IMR-90 (cell line): ENCODE measurements at regions of chr6 and their contacts with region 1.

Region 1: DNA sequence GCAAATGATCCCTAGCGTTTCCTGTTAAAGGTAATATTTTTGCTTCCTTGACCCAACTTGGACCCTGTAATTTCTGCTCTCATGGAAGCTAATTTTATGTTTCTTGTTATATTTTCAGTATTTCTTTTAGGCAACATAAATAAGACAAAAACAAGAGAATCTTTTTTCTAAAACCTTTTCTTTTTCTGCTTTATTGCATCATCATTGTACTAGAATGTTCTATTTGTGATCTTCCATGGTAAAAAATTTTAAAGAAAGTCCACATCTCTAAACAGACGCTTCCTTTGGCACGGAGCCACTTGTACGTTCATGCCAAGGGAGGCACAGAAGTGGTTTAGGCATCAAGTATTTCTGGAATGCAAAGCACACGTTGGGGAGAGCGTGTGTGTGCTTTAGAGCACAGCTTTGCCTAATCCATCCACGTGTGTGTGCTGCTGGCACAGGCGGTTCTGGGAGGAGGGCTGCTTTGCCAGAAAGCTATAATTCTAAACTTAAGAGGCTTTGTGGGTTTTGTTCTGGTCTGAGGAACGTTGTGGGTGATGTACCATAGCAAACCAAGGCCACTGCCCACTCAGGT is 98.3 kb downstream of the SASH1 start:
- DNase-seq: peak; percentile 85
- ATAC-seq: peak; percentile 73
- H3K4me3 ChIP-seq: no peak overlapping the region
- H3K27ac ChIP-seq: peak overlapping the region; percentile 83
- H3K4me1 ChIP-seq: peaks cover 15% of the 10 kb centered on the region
- H3K27me3 ChIP-seq: no peaks in the 10 kb centered on the region
- CTCF ChIP-seq: no peak
- POLR2A ChIP-seq: no peak
- RAD21 ChIP-seq: no peak

Region 2: DNA sequence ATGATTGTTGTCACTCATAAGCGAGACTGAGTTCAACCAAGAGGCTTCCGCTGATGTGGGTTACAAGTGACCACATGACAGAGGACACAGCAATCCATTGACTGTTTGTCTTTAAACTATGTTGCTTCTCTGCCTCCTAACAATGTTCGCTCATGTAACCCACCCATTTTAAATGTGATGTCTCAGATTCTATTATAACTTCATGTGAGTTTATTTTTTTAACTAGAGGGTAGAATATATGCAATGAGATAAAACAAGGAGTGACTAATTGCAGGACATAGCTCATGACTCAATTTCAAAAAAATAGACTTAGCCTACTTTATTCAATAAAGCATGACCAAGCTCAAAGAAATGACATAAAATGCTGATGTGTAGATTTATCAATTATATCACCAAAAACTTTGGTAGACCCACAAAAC is 217.5 kb before region 1 on chr6:
- CTCF ChIA-PET with region 1: no interaction called
- POLR2A ChIA-PET with region 1: no interaction called
- dilution Hi-C with region 1: no loop called
- in situ Hi-C with region 1: no loop called
- intact Hi-C with region 1: no loop called
- DNase-seq: peak; percentile 80
- ATAC-seq: peak; percentile 66
- H3K4me3 ChIP-seq: no peak overlapping the region
- H3K27ac ChIP-seq: peak overlapping the region; percentile 30; the same call in 1 of the 2 replicates
- H3K4me1 ChIP-seq: peaks cover 11% of the 10 kb centered on the region
- H3K27me3 ChIP-seq: no peaks in the 10 kb centered on the region
- CTCF ChIP-seq: no peak
- POLR2A ChIP-seq: no peak
- RAD21 ChIP-seq: no peak

Region 3: GRCh38 chr6:148513145-148514071 is 72.4 kb after region 1 on chr6:
- CTCF ChIA-PET with region 1: no interaction called
- POLR2A ChIA-PET with region 1: interaction called, 26 read pairs
- dilution Hi-C with region 1: no loop called
- in situ Hi-C with region 1: no loop called
- intact Hi-C with region 1: no loop called
- DNase-seq: peak; percentile 63
- ATAC-seq: peak; percentile 61
- H3K4me3 ChIP-seq: no peak overlapping the region
- H3K27ac ChIP-seq: peak overlapping the region; percentile 93
- H3K4me1 ChIP-seq: peaks cover 10% of the 10 kb centered on the region
- H3K27me3 ChIP-seq: no peaks in the 10 kb centered on the region
- CTCF ChIP-seq: no peak
- POLR2A ChIP-seq: no peak
- RAD21 ChIP-seq: no peak

Region 4: GRCh38 chr6:148548749-148549140 is 107.8 kb after region 1 on chr6:
- CTCF ChIA-PET with region 1: no interaction called
- POLR2A ChIA-PET with region 1: interaction called, 13 read pairs
- dilution Hi-C with region 1: no loop called
- in situ Hi-C with region 1: no loop called
- intact Hi-C with region 1: no loop called
- DNase-seq: no peak
- ATAC-seq: peak; percentile 13; the same call in 1 of the 2 replicates
- H3K4me3 ChIP-seq: no peak overlapping the region
- H3K27ac ChIP-seq: peak overlapping the region; percentile 20; the same call in 1 of the 2 replicates
- H3K4me1 ChIP-seq: peaks cover 6% of the 10 kb centered on the region; the same call in 1 of the 2 replicates
- H3K27me3 ChIP-seq: no peaks in the 10 kb centered on the region
- CTCF ChIP-seq: no peak
- POLR2A ChIP-seq: no peak
- RAD21 ChIP-seq: no peak

Region 5: GRCh38 chr6:148700741-148701311 is 259.9 kb after region 1 on chr6:
- CTCF ChIA-PET with region 1: no interaction called
- POLR2A ChIA-PET with region 1: no interaction called
- dilution Hi-C with region 1: no loop called
- in situ Hi-C with region 1: no loop called
- intact Hi-C with region 1: no loop called
- DNase-seq: peak; percentile 49
- ATAC-seq: peak; percentile 76
- H3K4me3 ChIP-seq: peak overlapping the region; percentile 45
- H3K27ac ChIP-seq: peak overlapping the region; percentile 27
- H3K4me1 ChIP-seq: peaks cover 2% of the 10 kb centered on the region; the same call in 1 of the 2 replicates
- H3K27me3 ChIP-seq: no peaks in the 10 kb centered on the region
- CTCF ChIP-seq: no peak
- POLR2A ChIP-seq: no peak
- RAD21 ChIP-seq: 0 out of 2 replicates have a peak, but pooled peaks have one; percentile 4

Region 6: DNA sequence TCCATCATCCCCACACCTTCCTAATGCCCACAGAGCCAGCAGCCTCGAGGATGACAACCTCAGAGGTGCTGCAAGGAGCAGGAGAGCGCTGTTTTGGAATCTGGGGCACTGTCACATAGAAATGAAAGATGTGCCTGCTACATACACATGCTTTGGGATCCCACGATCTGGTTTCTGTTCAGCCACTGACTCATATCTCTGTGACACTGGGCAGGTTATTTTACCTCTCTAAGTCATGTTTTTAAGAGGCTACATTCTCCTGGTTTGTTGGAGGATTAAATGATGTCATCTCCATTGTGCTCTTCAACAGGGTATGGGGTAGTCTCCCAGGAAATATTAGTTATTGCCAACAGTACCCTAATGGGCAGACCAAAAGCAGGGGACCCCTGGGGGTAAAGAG is 843.9 kb after region 1 on chr6:
- CTCF ChIA-PET with region 1: no interaction called
- POLR2A ChIA-PET with region 1: no interaction called
- dilution Hi-C with region 1: no loop called
- in situ Hi-C with region 1: no loop called
- intact Hi-C with region 1: no loop called
- DNase-seq: no peak
- ATAC-seq: no peak
- H3K4me3 ChIP-seq: no peak overlapping the region
- H3K27ac ChIP-seq: no peak overlapping the region
- H3K4me1 ChIP-seq: no peaks in the 10 kb centered on the region
- H3K27me3 ChIP-seq: peaks cover 14% of the 10 kb centered on the region
- CTCF ChIP-seq: no peak
- POLR2A ChIP-seq: no peak
- RAD21 ChIP-seq: no peak